ENCODE measurements at regions of chr3 and their contacts with region 1.

Region 1: DNA sequence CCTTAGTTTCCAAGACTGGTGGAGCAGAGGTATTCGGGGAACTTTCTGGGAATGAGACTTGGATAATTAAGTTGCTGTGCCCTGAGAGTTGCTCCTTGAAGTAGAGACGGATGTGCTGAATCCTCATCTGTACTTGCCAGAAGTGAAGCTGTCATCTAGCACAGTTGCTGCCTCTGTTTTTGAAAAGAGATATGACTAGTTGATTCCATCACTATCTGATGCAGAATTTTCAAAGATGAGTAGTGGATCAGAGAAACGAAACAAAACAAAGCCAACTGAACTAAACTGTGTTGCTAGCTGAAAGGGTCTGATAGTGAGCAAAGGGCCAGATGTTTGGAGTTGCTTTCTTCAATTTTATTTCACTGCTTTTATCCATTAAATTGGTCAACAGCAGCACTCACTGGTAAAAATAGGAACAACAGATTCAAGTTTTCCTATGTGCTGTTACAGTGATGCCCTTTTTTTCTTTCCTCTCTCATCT is 52.7 kb downstream of the MITF start:
- DNase-seq: no peak
- ATAC-seq: peak; percentile 70; the same call in 1 of the 2 replicates
- H3K4me3 ChIP-seq: no peak overlapping the region
- H3K27ac ChIP-seq: no peak overlapping the region
- H3K4me1 ChIP-seq: no peaks in the 10 kb centered on the region
- H3K27me3 ChIP-seq: no peaks in the 10 kb centered on the region
- CTCF ChIP-seq: peak; percentile 30; the same call in 1 of the 2 replicates

Region 2: DNA sequence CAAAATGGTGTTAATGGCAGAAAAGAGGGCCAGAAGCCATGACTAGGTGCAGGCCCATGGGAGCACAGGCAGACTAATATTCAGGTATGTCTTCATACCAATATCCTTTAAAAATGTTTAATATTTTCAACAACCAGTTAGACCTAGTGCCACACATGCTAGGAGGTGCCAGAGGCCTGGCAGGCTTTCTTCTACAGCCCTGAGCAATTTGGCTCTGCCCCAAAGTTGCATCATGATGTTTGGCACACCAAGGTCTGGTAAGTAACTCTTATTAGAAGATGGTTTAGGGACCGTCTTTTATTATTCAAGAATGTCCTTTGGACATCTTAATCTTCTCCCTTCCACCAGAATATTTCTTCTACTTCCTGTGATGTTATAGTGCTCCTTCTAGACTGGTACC is 17.9 kb before region 1 on chr3:
- CTCF ChIA-PET with region 1: interaction called, 16 read pairs
- POLR2A ChIA-PET with region 1: no interaction called
- in situ Hi-C with region 1: no loop called
- intact Hi-C with region 1: no loop called
- DNase-seq: no peak
- ATAC-seq: no peak
- H3K4me3 ChIP-seq: no peak overlapping the region
- H3K27ac ChIP-seq: no peak overlapping the region
- H3K4me1 ChIP-seq: peaks cover 11% of the 10 kb centered on the region
- H3K27me3 ChIP-seq: no peaks in the 10 kb centered on the region
- CTCF ChIP-seq: no peak

Region 3: GRCh38 chr3:69811452-69812401 is 19.8 kb after region 1 on chr3:
- CTCF ChIA-PET with region 1: no interaction called
- POLR2A ChIA-PET with region 1: no interaction called
- in situ Hi-C with region 1: no loop called
- intact Hi-C with region 1: no loop called
- DNase-seq: no peak
- ATAC-seq: no peak
- H3K4me3 ChIP-seq: no peak overlapping the region
- H3K27ac ChIP-seq: no peak overlapping the region
- H3K4me1 ChIP-seq: 0 out of 2 replicates have a peak, but pooled peaks cover 2% of the 10 kb centered on the region
- H3K27me3 ChIP-seq: no peaks in the 10 kb centered on the region
- CTCF ChIP-seq: no peak